Activated CD4-positive, alpha-beta T cell treated with anti-CD3 and anti-CD28 coated beads for 36 hours (primary cell): ENCODE measurements at regions of chr17 and their contacts with region 1.

Region 1: GRCh38 chr17:68435876-68436842 is 21.1 kb downstream of the WIPI1 start:
- DNase-seq: peak; percentile 91
- ATAC-seq: peak; percentile 80
- H3K4me3 Mint-ChIP-seq: no peak overlapping the region
- H3K27ac Mint-ChIP-seq: peak overlapping the region; percentile 79
- H3K4me1 Mint-ChIP-seq: peaks cover 44% of the 10 kb centered on the region
- H3K27me3 Mint-ChIP-seq: no peaks in the 10 kb centered on the region

Region 2: GRCh38 chr17:68247445-68248198 is 188.5 kb before region 1 on chr17 and contains the start of gene AMZ2:
- CTCF ChIA-PET with region 1: interaction called, 12 read pairs
- POLR2A ChIA-PET with region 1: no interaction called
- intact Hi-C with region 1: no loop called
- DNase-seq: peak; percentile 98
- ATAC-seq: peak; percentile 84
- H3K4me3 Mint-ChIP-seq: peak within 1 kb of the TSS; percentile 88
- H3K27ac Mint-ChIP-seq: peak within 1 kb of the TSS; percentile 99
- H3K4me1 Mint-ChIP-seq: peaks cover 37% of the 10 kb centered on the region
- H3K27me3 Mint-ChIP-seq: no peaks in the 10 kb centered on the region
- total RNA-seq, gene AMZ2: 119 to 150 TPM

Region 3: GRCh38 chr17:68346448-68346847 is 89.7 kb before region 1 on chr17:
- CTCF ChIA-PET with region 1: interaction called, 3 read pairs
- POLR2A ChIA-PET with region 1: no interaction called
- intact Hi-C with region 1: loop called in 1 of 2 experiments (anchors 5 kb)
- DNase-seq: peak; percentile 88
- ATAC-seq: peak; percentile 84
- H3K4me3 Mint-ChIP-seq: peak overlapping the region; percentile 79
- H3K27ac Mint-ChIP-seq: peak overlapping the region; percentile 100
- H3K4me1 Mint-ChIP-seq: peaks cover 67% of the 10 kb centered on the region
- H3K27me3 Mint-ChIP-seq: no peaks in the 10 kb centered on the region

Region 4: DNA sequence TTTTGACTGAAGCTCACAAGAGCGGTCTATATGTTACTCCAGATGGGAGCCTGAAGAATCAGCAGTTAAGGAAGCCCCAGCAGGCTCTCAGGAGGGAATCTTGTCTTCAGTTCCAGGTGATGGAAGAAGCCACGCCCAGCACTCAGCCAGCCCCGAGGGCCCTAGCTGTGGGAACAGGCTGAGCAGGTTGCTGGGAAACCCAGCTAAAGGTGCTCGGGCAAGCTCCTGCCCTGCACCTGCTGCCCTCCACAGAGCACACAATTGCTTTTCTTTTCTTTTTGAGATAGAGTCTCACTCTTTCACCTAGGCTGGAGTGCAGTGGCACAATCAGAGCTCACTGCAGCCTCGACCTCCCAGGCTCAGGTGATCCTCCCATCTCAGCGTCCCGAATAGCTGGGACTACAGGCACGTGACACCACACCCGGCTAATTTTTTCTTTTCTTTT is 11.2 kb before region 1 on chr17:
- CTCF ChIA-PET with region 1: interaction called, 10 read pairs
- POLR2A ChIA-PET with region 1: interaction called, 3 read pairs
- intact Hi-C with region 1: no loop called
- DNase-seq: no peak
- ATAC-seq: no peak
- H3K4me3 Mint-ChIP-seq: no peak overlapping the region
- H3K27ac Mint-ChIP-seq: no peak overlapping the region
- H3K4me1 Mint-ChIP-seq: no peaks in the 10 kb centered on the region
- H3K27me3 Mint-ChIP-seq: no peaks in the 10 kb centered on the region

Region 5: DNA sequence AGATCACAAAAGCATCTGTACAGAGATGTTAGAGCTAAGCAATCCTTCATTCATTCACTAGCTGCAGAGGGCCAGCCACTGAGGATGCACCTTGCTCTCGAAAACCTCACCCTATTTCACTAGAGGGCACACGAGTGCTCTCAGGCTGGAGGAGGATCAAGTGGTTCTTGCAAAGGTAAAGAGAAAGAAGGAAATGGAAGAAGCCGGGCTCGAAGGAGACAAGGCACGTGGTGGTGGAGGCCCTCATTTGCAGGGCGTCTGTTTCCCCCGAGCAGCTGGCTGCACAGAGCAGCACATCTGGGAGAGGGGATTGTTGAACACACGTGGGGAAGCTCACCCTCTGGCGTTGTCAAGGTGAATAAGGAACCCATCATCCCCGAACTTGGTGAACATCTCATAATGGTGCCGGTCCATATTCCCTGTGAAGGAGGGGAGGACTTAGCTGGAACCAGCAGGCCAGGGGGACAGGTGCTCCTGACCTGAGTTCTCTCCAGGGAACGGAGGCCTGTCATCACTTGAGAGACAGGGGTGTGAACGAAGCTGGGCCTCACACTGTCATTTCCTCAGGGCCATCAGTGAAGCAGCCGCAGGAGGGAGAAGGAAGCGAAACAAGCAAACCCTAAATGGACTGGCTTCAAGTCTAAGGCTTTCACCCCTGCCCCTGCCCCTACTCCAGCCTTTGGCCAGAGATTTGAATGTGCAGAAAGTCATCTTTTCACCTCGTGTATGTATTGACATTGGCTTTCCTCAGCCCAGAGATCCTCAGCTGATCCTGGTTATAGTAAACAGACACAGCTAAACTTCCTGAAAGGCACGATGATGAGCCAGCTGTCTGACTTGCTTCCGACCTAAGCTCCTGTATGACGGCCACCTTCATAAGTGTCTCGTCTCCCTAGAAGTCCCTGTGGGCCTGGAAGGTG is 103.6 kb after region 1 on chr17:
- CTCF ChIA-PET with region 1: no interaction called
- POLR2A ChIA-PET with region 1: no interaction called
- intact Hi-C with region 1: no loop called
- DNase-seq: no peak
- ATAC-seq: no peak
- H3K4me3 Mint-ChIP-seq: no peak overlapping the region
- H3K27ac Mint-ChIP-seq: no peak overlapping the region
- H3K4me1 Mint-ChIP-seq: peaks cover 2% of the 10 kb centered on the region
- H3K27me3 Mint-ChIP-seq: no peaks in the 10 kb centered on the region

Region 6: DNA sequence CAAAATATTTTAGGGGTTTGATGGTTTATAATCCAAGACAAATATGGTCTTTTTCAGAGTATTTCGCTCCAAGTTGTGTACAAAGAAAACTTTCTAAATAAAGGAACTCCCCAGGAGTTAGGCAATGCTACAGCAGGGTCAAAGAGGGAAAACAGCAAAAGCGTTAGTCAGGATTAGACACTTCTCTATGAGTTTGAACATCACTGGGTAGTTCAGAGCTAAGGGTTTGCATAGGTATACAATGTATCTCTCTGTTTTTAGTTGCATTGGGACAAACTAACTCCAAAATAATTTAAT is 130.2 kb after region 1 on chr17:
- CTCF ChIA-PET with region 1: no interaction called
- POLR2A ChIA-PET with region 1: no interaction called
- intact Hi-C with region 1: no loop called
- DNase-seq: no peak
- ATAC-seq: no peak
- H3K4me3 Mint-ChIP-seq: no peak overlapping the region
- H3K27ac Mint-ChIP-seq: no peak overlapping the region
- H3K4me1 Mint-ChIP-seq: no peaks in the 10 kb centered on the region
- H3K27me3 Mint-ChIP-seq: peaks cover 6% of the 10 kb centered on the region